GM13977 (cell line): ENCODE measurements at regions of chr2 and their contacts with region 1.

Region 1: DNA sequence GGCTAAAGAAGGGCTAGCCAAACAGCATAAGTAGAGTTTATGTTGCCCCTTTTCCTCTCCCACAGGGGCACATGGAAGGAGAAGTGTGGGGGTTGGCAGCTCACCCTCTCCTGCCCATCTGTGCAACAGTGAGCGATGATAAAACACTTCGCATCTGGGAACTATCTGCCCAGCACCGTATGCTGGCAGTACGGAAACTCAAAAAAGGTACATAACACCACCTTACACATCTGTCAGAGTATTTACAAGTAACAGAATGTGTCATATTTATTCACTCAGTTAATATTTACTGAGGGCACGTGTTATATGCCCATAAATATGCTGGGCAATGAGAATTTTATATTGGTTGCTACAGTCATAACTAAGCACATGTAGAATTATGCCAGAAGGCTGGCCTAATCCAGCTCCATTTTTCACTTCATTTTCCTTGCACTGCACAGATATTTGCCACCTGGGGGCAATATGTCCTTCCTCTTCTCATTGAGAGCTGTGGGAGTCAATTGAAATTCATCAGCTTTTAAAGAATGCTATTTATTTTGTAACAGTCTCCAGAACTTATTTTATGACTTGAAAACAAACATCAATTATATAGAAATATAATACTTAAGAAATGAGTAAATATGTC is 150.6 kb downstream of the RTN4 start:
- DNase-seq: peak; percentile 17
- CTCF ChIP-seq: peak; percentile 58

Region 2: GRCh38 chr2:54262015-54262765 is 637.5 kb before region 1 on chr2:
- in situ Hi-C with region 1: no loop called
- DNase-seq: no peak
- CTCF ChIP-seq: no peak

Region 3: DNA sequence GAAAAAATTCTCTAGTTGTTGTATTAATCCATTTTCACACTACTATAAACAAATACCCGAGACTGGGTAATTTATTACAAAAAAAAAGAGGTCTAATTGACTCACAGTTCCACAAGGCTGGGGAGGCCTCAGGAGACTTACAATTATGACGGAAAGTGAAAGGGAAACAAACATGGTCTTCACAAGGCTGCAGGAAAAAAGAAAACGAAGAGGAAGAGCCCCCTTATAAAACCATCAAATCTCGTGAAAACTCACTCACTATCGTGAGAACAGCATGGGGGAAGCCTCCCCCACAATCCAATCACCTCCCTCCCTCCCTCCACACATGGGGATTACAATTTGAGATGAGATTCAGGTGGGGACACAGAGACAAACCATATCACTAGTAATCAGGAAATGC is 505.3 kb before region 1 on chr2:
- in situ Hi-C with region 1: no loop called
- DNase-seq: no peak
- CTCF ChIP-seq: no peak

Region 4: GRCh38 chr2:54624591-54625071 is 275.1 kb before region 1 on chr2:
- in situ Hi-C with region 1: no loop called
- DNase-seq: no peak
- CTCF ChIP-seq: no peak

Region 5: DNA sequence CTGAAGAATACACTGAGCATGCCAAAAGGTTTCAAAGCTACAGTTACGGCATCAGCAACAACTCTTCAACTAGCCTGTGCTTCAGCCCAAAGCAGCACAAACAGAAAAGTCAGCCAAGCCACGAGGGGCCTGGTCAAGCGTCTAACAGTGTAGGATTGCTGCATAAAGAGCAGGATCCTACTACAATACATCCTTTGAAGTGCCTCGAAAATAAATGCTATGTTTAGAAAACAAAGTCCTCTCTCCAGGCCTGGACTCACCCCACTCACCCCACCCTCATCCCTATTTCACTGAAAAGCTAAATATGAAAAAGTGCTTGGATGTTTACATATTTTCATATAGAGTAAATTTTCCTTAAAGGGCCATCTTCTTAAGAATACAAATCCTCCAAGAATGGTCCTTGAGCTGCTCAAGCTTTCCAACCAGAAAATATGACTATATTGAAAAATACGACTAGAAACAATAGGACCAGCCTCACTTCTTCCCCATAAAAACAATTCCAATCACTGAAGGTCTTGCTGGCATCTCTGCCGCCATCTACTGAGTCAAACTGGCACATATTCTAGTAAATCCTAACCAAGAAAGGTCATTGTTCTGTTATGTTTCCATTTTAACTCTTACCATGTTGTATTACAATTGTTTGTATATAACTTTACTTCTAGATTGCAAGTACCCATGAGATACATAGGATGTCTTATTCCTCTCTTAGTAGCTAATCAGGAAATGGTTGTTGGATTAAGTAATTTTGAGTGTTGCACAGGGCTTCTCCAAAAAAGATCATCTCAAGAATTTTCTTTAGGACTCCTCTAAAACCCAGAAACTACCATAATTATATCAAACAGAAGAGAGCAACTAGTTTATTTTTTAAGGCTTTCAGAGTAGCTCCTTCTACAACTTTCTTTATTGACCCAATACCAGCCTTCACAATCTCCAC is 268.8 kb after region 1 on chr2:
- in situ Hi-C with region 1: loop called (anchors 25 kb)
- DNase-seq: peak; percentile 43
- CTCF ChIP-seq: peak; percentile 67

Region 6: GRCh38 chr2:55547001-55547400 is 647.3 kb after region 1 on chr2:
- in situ Hi-C with region 1: no loop called
- DNase-seq: no peak
- CTCF ChIP-seq: no peak